B cell (primary cell): ENCODE measurements at regions of chr5 and their contacts with region 1.

Region 1: DNA sequence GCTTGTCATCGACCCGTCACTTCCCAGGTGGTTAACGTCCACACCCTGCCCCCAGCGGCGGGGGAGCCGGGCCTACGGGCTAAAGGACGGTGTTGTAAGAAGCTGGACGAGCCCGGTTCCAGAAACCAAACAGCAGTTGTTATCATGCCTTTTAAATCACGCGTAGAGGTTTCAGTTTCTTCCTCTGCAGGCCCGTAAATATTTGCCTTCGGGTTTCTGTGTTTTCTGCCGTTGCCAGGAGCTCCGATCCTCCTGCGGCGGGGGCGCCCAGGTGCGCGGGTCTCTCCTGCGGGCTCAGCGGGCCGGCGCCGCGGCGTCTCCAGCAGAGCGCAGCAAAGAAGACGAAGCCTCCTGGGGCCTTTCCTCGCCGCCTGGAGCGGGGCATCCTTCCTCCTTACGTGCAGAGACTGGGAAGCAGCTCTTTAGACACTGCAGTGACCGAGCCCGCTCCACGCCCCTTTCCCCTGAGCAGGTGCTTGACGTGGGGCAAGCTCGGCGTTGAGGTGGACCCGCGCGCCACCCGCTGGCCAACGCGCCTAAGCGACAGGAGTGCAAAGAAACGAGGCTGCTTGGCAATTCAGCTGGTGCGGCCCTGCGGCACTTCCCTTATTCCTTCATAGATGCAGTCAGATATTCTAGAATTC is 21.8 kb upstream of the TTC1 start:
- DNase-seq: peak; percentile 88
- ATAC-seq: peak; percentile 98
- H3K4me3 ChIP-seq: peak overlapping the region in 4 of 5 experiments; percentile 42 to 60 (median 54)
- H3K4me3 Mint-ChIP-seq: peak overlapping the region; percentile 79
- H3K27ac ChIP-seq: peak overlapping the region in 1 of 2 donors; percentile 45
- H3K27ac Mint-ChIP-seq: peak overlapping the region; percentile 51
- H3K4me1 ChIP-seq: peaks cover 6 to 7% of the 10 kb centered on the region in 2 donors
- H3K4me1 Mint-ChIP-seq: peaks cover 7% of the 10 kb centered on the region
- H3K27me3 ChIP-seq: peaks cover 0 to 4% (median 0%) of the 10 kb centered on the region in 4 experiments
- H3K27me3 Mint-ChIP-seq: peaks cover 16% of the 10 kb centered on the region
- CTCF ChIP-seq: peak; percentile 79

Region 2: GRCh38 chr5:159209438-159210305 is 777.5 kb before region 1 on chr5 and contains the start of gene RNF145:
- CTCF ChIA-PET with region 1: no interaction called
- POLR2A ChIA-PET with region 1: no interaction called
- intact Hi-C with region 1: loop called (anchors 10 kb)
- DNase-seq: peak; percentile 98
- ATAC-seq: peak; percentile 80
- H3K4me3 ChIP-seq: peak within 1 kb of the TSS; percentile 62 to 91 (median 82)
- H3K4me3 Mint-ChIP-seq: peak within 1 kb of the TSS; percentile 98
- H3K27ac ChIP-seq: peak within 1 kb of the TSS; percentile 84 to 85
- H3K27ac Mint-ChIP-seq: peak within 1 kb of the TSS; percentile 97
- H3K4me1 ChIP-seq: peaks cover 38 to 43% of the 10 kb centered on the region in 2 donors
- H3K4me1 Mint-ChIP-seq: peaks cover 50% of the 10 kb centered on the region
- H3K27me3 ChIP-seq: no peaks in the 10 kb centered on the region
- H3K27me3 Mint-ChIP-seq: no peaks in the 10 kb centered on the region
- CTCF ChIP-seq: no peak
- total RNA-seq, gene RNF145: 56.0 and 57.2 TPM in 2 replicates

Region 3: DNA sequence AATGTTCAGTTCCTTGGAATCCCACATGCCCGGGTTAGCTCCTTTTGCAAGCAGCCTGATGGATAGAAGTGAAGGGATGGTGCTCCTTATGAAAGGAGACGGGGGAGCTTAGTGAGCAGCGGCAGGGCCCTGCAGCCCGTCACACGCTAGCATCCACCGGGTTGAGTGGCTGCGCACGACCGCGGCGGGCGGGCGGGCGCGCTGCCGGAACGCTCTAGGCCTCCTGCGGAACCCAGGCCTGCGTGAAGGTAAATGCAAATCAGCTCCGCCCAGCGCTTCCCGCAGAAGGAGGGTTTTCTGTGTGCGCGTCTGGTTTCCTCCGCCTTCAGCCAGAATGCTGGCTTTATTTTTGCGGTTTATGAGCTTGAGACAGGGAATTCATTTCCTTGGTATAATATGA is 676.6 kb before region 1 on chr5:
- CTCF ChIA-PET with region 1: interaction called, 10 read pairs
- POLR2A ChIA-PET with region 1: no interaction called
- intact Hi-C with region 1: no loop called
- DNase-seq: peak; percentile 70
- ATAC-seq: peak; percentile 91
- H3K4me3 ChIP-seq: peak overlapping the region; percentile 16 to 61 (median 36)
- H3K4me3 Mint-ChIP-seq: peak overlapping the region; percentile 76
- H3K27ac ChIP-seq: no peak overlapping the region
- H3K27ac Mint-ChIP-seq: peak overlapping the region; percentile 2
- H3K4me1 ChIP-seq: peaks cover 13 to 19% of the 10 kb centered on the region in 2 donors
- H3K4me1 Mint-ChIP-seq: peaks cover 18% of the 10 kb centered on the region
- H3K27me3 ChIP-seq: peaks cover 0 to 6% (median 2%) of the 10 kb centered on the region in 4 experiments
- H3K27me3 Mint-ChIP-seq: peaks cover 10% of the 10 kb centered on the region
- CTCF ChIP-seq: no peak

Region 4: DNA sequence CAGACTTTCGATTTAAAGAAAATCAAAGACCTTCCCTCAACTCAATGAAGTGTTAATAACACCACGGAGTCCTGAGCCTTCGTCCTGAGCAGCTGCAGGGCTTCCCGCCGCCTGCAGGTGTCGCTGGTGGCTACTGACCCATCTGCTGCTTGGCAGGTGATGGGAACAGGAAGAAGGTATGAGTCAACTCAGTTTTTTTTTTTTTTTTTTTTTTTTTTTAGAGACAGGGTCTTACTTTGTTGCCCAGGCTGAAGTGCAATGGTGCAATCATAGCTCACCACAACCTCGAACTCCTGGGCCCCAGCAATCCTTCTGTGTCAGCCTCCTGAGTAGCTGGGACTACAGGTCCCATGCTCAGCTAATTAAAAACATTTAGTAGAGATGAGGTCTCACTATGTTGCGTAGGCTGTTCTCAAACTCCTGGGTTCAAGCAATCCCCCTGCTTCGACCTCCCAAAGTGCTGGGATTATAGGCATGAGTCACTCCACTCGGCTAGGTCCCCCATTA is 471.2 kb before region 1 on chr5:
- CTCF ChIA-PET with region 1: interaction called, 9 read pairs
- POLR2A ChIA-PET with region 1: no interaction called
- intact Hi-C with region 1: loop called (anchors 5 kb)
- DNase-seq: peak; percentile 62
- ATAC-seq: peak; percentile 85
- H3K4me3 ChIP-seq: no peak overlapping the region
- H3K4me3 Mint-ChIP-seq: no peak overlapping the region
- H3K27ac ChIP-seq: no peak overlapping the region
- H3K27ac Mint-ChIP-seq: no peak overlapping the region
- H3K4me1 ChIP-seq: peaks cover 3 to 6% of the 10 kb centered on the region in 2 donors
- H3K4me1 Mint-ChIP-seq: peaks cover 6% of the 10 kb centered on the region
- H3K27me3 ChIP-seq: peaks cover 0 to 3% (median 0%) of the 10 kb centered on the region in 4 experiments
- H3K27me3 Mint-ChIP-seq: no peaks in the 10 kb centered on the region
- CTCF ChIP-seq: peak; percentile 75

Region 5: GRCh38 chr5:159965031-159965837 is 21.9 kb before region 1 on chr5:
- CTCF ChIA-PET with region 1: interaction called, 11 read pairs
- POLR2A ChIA-PET with region 1: no interaction called
- intact Hi-C with region 1: no loop called
- DNase-seq: peak; percentile 32
- ATAC-seq: peak; percentile 49
- H3K4me3 ChIP-seq: no peak overlapping the region
- H3K4me3 Mint-ChIP-seq: no peak overlapping the region
- H3K27ac ChIP-seq: no peak overlapping the region
- H3K27ac Mint-ChIP-seq: no peak overlapping the region
- H3K4me1 ChIP-seq: peaks cover 0 to 3% of the 10 kb centered on the region in 2 donors
- H3K4me1 Mint-ChIP-seq: no peaks in the 10 kb centered on the region
- H3K27me3 ChIP-seq: peaks cover 0 to 22% (median 14%) of the 10 kb centered on the region in 4 experiments
- H3K27me3 Mint-ChIP-seq: peaks cover 42% of the 10 kb centered on the region
- CTCF ChIP-seq: peak; percentile 50

Region 6: GRCh38 chr5:160008877-160009590 is 21.9 kb after region 1 on chr5 and contains the start of gene TTC1:
- CTCF ChIA-PET with region 1: interaction called, 25 read pairs
- POLR2A ChIA-PET with region 1: no interaction called
- intact Hi-C with region 1: no loop called
- DNase-seq: peak; percentile 98
- ATAC-seq: peak; percentile 97
- H3K4me3 ChIP-seq: peak within 1 kb of the TSS; percentile 85 to 100 (median 98)
- H3K4me3 Mint-ChIP-seq: peak within 1 kb of the TSS; percentile 87
- H3K27ac ChIP-seq: peak within 1 kb of the TSS; percentile 77 to 96
- H3K27ac Mint-ChIP-seq: peak within 1 kb of the TSS; percentile 83
- H3K4me1 ChIP-seq: peaks cover 18 to 19% of the 10 kb centered on the region in 2 donors
- H3K4me1 Mint-ChIP-seq: peaks cover 25% of the 10 kb centered on the region
- H3K27me3 ChIP-seq: no peaks in the 10 kb centered on the region
- H3K27me3 Mint-ChIP-seq: no peaks in the 10 kb centered on the region
- CTCF ChIP-seq: no peak
- total RNA-seq, gene TTC1: 37.5 and 40.4 TPM in 2 replicates